ENCODE measurements at regions of chr13 and their contacts with region 1.

Region 1: DNA sequence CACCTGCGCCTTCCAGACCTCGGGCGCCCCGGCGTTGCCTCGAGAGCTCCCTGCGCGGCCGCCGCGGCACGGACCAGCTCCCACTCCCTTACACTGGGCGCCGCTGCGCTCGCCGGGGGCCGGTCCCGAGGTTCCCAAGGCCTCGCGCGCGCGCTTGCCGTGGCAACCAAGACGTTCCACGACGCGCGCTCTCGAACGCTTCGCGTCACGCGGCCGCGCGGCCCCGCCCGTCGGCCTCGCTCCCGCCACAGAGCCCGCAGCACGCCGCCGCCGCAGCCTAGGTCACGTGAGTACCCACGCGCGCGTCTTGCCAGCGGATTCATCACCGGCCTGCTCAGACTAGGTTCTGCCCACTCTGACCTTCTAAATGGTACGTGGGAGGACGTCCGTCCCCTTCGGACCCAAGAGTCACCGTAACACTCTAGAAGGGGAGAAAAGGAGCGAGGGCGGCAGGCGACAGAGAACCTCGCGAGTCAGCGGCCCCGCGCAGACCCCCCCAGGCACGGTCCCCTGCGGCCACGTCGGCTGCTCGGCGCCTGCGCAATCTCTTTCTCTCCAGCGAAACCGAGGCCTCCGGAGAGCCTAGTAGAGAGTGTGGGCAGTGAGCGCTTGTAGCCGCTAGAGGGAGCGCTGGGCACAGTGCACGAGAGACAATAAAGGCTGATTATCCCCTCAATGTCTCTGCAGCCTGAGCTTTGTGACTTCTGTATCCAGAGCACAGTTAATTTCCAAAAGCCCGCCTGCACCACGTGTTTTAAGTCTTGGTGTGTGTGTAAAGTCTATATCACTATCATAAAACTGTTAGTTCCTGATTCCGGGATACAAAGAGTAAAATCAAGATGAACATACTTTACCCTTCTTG is at the start of gene SPART:
- DNase-seq: peak; percentile 90
- ATAC-seq: peak; percentile 88
- H3K4me3 Mint-ChIP-seq: peak within 1 kb of the TSS; percentile 90
- H3K27ac Mint-ChIP-seq: peak within 1 kb of the TSS; percentile 99
- H3K4me1 Mint-ChIP-seq: peaks cover 37% of the 10 kb centered on the region
- H3K27me3 Mint-ChIP-seq: no peaks in the 10 kb centered on the region; the same call in 1 of the 2 replicates
- CTCF ChIP-seq: peak; percentile 84
- total RNA-seq, gene SPART: 88.8 to 95.7 TPM (median 95.7 TPM) in 3 replicates

Region 2: DNA sequence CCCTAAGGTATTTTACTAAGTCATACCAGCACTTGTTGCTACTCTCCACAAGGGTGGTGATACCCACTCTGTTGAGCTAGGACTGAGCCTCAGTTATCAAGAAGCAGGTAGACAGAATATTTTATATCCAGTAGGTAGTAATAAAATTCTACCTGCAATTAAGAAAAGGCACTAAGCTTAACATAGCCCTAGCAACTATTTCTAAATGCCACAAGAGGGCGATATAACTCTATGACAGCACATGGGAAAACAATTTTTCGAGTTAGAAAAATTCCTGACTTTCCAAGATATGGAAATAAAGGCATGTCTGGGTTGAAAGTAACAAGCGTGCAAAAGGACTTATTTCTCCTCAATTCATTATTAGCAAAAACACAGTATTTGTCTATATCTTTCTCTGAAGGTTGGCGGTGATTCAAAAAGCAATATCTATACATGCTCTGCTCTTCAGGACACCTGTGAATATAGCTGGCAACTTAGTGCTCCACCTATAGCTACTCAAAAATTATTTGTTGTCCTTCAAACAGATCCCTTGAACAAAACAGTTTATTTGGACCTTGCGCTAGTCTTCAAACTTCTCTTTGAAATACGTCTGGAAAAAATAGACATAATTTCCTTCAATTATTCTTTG is 63.5 kb before region 1 on chr13:
- CTCF ChIA-PET with region 1: interaction called, 19 read pairs
- POLR2A ChIA-PET with region 1: no interaction called
- DNase-seq: no peak
- ATAC-seq: peak; percentile 62; the same call in 1 of the 2 replicates
- H3K4me3 Mint-ChIP-seq: no peak overlapping the region
- H3K27ac Mint-ChIP-seq: peak overlapping the region; percentile 5; the same call in 1 of the 2 replicates
- H3K4me1 Mint-ChIP-seq: peaks cover 19% of the 10 kb centered on the region
- H3K27me3 Mint-ChIP-seq: no peaks in the 10 kb centered on the region
- CTCF ChIP-seq: peak; percentile 81

Region 3: DNA sequence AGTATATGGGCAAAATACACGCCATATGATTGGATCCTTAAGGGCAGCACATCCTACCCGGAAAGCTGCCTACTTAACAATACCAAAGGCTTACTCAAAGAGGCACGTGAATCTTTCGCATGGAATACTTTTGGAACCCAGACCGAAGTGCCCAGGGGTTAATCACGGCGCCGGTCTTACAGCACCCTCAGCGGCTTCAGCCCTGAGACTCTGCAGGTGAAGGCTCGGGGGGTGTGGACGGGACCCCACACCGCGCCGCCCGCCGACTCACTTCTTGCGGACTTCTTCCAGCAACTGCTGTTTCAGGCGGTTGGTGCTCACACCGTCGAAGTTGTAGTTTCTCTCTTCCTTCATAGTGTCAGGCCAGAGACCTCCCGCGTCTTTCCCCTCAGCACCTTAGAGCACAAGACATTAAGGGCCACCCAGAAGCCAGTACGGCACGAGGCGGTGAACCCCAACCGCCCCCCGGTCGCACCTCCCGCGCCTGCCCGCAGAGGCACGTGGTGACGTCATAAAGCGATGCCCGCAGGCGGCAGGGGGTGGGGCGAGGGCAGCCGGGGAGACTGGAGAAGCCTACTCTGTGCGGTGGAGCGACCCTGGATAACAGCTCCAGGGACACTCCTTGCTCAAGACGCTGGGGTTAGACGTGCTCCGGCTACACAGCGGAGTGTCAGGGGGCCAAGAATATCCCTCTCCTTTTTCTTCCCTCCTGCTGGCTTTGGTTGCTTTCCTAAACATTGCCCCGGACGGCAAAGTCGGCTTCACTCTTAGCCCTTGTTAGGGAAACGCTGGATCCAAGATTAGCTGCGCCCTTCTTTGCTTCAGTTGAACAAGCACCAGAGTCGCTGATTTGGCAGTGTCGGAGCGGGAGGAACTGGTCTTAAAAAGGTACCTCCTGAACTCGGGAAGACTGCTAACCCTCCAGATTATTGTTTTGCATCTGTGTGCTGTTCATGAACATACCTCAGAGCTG is 48.8 kb before region 1 on chr13 and contains the start of gene CCDC169:
- CTCF ChIA-PET with region 1: interaction called, 12 read pairs
- POLR2A ChIA-PET with region 1: interaction called, 13 read pairs
- DNase-seq: peak; percentile 93
- ATAC-seq: peak; percentile 76
- H3K4me3 Mint-ChIP-seq: peak within 1 kb of the TSS; percentile 86
- H3K27ac Mint-ChIP-seq: peak within 1 kb of the TSS; percentile 100
- H3K4me1 Mint-ChIP-seq: peaks cover 65% of the 10 kb centered on the region
- H3K27me3 Mint-ChIP-seq: no peaks in the 10 kb centered on the region
- CTCF ChIP-seq: no peak
- total RNA-seq, gene CCDC169: 36.8 to 41.8 TPM (median 39.8 TPM) in 3 replicates

Region 4: DNA sequence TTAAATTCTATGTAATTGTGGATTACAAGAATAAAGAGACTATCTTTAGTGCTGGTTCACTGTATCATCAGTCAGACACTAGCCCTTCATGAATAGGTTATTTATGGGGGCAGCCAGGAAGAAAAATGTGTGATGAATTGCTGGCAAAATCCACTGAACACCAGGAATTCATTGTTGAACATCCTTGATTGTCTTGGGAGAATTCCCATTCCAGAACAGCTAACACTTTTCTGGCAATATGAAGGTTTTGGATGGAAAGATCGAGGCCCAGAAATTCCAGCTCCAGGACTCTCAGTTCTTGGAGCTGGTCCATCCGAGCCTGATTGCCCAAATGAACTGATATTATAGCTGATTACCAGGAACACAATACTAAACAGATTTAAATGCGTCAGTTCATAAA is 11.2 kb after region 1 on chr13:
- CTCF ChIA-PET with region 1: interaction called, 13 read pairs
- POLR2A ChIA-PET with region 1: no interaction called
- DNase-seq: no peak
- ATAC-seq: no peak
- H3K4me3 Mint-ChIP-seq: no peak overlapping the region
- H3K27ac Mint-ChIP-seq: no peak overlapping the region
- H3K4me1 Mint-ChIP-seq: peaks cover 6% of the 10 kb centered on the region
- H3K27me3 Mint-ChIP-seq: peaks cover 27% of the 10 kb centered on the region
- CTCF ChIP-seq: no peak

Region 5: DNA sequence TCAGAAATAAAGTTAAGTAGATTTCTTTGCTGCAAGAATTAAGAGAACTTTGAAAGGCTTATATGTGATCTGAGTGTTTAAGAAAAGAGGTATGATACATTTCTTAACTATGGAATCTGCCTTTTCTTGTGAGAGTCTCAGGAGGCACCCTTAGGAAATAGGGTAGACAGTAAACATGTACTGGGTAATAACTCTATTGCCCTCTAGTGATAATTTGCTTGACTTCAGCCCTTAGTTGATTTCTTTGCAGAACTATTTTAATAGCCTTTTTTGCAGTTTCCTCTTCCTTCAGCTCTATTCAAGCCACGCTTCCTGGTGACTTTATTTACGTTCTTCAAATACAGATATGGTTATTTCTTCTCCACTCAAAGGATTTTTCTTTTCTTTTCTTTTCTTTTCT is 48.8 kb after region 1 on chr13:
- CTCF ChIA-PET with region 1: interaction called, 15 read pairs
- POLR2A ChIA-PET with region 1: interaction called, 3 read pairs
- DNase-seq: no peak
- ATAC-seq: peak; percentile 69
- H3K4me3 Mint-ChIP-seq: no peak overlapping the region
- H3K27ac Mint-ChIP-seq: no peak overlapping the region
- H3K4me1 Mint-ChIP-seq: no peaks in the 10 kb centered on the region
- H3K27me3 Mint-ChIP-seq: no peaks in the 10 kb centered on the region
- CTCF ChIP-seq: no peak

Region 6: GRCh38 chr13:36431654-36432511 is 85.4 kb after region 1 on chr13 and contains the start of gene CCNA1:
- CTCF ChIA-PET with region 1: interaction called, 11 read pairs
- POLR2A ChIA-PET with region 1: no interaction called
- DNase-seq: peak; percentile 89
- ATAC-seq: peak; percentile 92
- H3K4me3 Mint-ChIP-seq: peak within 1 kb of the TSS; percentile 81
- H3K27ac Mint-ChIP-seq: no peak within 1 kb of the TSS
- H3K4me1 Mint-ChIP-seq: peaks cover 19% of the 10 kb centered on the region
- H3K27me3 Mint-ChIP-seq: peaks cover 68% of the 10 kb centered on the region
- CTCF ChIP-seq: no peak
- total RNA-seq, gene CCNA1: 2.7 to 3.8 TPM (median 3.4 TPM) in 3 replicates